ENCODE measurements at regions of chr4 and their contacts with region 1.

Region 1: DNA sequence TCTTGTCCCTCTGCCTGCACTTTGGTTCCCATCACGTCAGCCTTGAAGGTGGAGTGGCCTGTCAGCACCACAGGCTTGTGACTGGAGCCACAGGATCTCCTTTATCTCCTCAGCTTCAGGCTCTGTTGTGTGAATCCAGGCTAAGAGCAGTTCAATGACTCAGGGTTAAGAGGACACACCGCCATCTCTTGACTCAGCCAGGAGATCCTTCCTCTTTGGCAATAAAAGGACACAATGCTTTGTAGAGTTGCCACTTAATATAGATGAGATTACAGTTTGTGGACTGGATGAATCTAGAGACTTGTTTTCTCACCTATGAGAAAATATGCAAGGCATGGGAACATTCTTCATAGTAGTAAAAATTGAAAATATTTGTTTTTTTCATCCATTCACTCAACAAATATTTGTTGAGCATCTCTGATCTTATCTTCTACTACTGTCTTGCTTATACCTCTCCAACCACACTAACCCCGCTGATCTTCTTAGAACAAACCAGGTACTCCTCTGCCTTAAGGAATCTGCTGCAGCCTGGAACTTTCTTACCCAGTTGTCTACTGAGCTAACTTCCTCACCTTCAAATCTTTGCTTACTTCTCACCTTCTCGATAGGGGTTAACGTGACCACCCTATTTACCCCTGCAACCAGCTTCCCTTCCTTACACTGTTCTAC is 62.3 kb downstream of the UCHL1 start:
- DNase-seq: peak; percentile 38
- H3K4me3 Mint-ChIP-seq: no peak overlapping the region
- H3K27ac Mint-ChIP-seq: peak overlapping the region; percentile 5
- H3K4me1 Mint-ChIP-seq: peaks cover 18% of the 10 kb centered on the region
- H3K27me3 Mint-ChIP-seq: no peaks in the 10 kb centered on the region
- CTCF ChIP-seq: no peak

Region 2: DNA sequence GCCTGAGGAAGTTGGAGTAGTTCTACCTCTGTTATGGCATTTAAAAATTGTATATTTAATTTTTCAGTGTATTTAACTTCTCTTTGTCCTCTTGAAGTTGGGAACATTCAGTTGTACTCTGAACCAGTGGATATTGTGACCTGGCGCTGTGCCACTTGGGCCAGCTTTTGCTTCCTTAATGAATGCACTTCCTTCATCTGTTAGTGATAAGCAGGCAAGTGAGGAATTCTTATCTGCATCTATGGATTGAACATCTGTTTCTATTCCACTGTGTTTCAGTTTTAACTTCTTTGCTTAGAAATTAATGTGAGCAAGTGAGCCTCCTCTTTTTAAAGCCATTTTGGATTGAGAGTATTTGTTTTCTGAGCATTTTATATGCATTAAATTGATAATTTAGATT is 66.0 kb after region 1 on chr4:
- CTCF ChIA-PET with region 1: no interaction called
- POLR2A ChIA-PET with region 1: no interaction called
- intact Hi-C with region 1: loop called (anchors 2 kb)
- DNase-seq: no peak
- H3K4me3 Mint-ChIP-seq: no peak overlapping the region
- H3K27ac Mint-ChIP-seq: no peak overlapping the region
- H3K4me1 Mint-ChIP-seq: peaks cover 7% of the 10 kb centered on the region
- H3K27me3 Mint-ChIP-seq: no peaks in the 10 kb centered on the region
- CTCF ChIP-seq: no peak

Measured in MCF 10A (cell line).